ENCODE measurements at regions of chr20 and their contacts with region 1.

Region 1: DNA sequence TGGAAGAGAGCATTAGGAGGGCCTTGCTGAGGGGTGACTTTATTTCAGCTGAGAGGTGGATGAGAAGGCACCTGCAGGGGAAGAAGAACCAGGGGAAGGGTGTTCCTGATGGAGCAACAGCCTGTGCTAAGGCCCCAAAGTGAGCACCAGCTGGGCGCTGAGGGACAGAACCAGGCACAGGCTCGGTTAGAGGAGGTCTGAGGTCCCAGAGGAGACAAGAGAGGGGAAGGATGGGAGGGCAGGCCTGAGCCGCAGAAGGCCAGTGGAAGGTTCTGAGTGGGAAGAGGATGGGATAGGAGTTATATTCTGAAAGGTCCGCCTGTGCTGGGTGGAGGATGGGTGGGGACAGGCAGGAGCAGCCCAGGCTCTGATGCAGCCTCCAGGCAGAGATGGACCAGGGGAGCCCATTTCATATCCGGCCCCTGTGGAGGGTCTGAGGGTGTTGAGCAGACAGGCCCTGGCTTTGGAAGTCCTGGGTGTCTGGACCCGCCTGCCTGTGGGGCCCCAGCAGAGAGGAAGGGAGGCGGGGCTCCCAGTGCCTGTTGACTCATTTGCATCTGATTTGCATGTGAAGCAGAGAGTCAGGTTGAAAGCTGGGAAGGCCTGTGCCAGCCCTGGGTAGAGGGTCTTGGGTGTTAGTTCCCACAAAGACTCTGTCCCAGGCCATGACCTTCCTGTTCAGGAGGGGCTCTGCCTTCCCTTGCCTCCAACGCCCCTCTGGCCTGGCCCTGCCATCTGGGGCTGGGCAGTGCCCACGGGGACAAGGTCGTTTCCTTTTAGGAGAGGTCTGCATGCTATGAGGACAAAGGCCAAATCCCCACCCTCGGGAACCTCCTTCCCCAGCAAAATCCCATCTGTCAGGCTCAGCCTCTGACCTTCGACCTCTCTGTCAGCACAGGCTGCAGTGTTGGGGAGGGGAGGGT is 10.6 kb upstream of the FAM110A start:
- DNase-seq: peak; percentile 54
- H3K4me3 Mint-ChIP-seq: no peak overlapping the region
- H3K27ac Mint-ChIP-seq: no peak overlapping the region
- H3K4me1 Mint-ChIP-seq: peaks cover 9% of the 10 kb centered on the region
- H3K27me3 Mint-ChIP-seq: peaks cover under 1% of the 10 kb centered on the region

Region 2: GRCh38 chr20:856361-857040 is 33.6 kb after region 1 on chr20:
- intact Hi-C with region 1: loop called (anchors 5 kb)
- DNase-seq: peak; percentile 75
- H3K4me3 Mint-ChIP-seq: peak overlapping the region; percentile 38
- H3K27ac Mint-ChIP-seq: peak overlapping the region; percentile 65
- H3K4me1 Mint-ChIP-seq: peaks cover 65% of the 10 kb centered on the region
- H3K27me3 Mint-ChIP-seq: no peaks in the 10 kb centered on the region

Measured in activated CD4-positive, alpha-beta T cell treated with anti-CD3 and anti-CD28 coated beads, Interleukin-2, amount 10 ng/mL, durations not matched to agents 24 days and 14 days (primary cell).